ENCODE measurements at regions of chr15 and their contacts with region 1.

Region 1: GRCh38 chr15:94119923-94120775 is 111.2 kb upstream of the MCTP2 start:
- DNase-seq: peak; percentile 73 to 82
- H3K4me3 ChIP-seq: no peak overlapping the region
- H3K27ac ChIP-seq: peak overlapping the region; percentile 57 to 72
- H3K4me1 ChIP-seq: peaks cover 0 to 5% of the 10 kb centered on the region in 2 donors
- H3K27me3 ChIP-seq: no peaks in the 10 kb centered on the region
- CTCF ChIP-seq: peak; percentile 95 to 100 (median 98)
- POLR2A ChIP-seq: peak in 1 of 2 donors; percentile 35

Region 2: DNA sequence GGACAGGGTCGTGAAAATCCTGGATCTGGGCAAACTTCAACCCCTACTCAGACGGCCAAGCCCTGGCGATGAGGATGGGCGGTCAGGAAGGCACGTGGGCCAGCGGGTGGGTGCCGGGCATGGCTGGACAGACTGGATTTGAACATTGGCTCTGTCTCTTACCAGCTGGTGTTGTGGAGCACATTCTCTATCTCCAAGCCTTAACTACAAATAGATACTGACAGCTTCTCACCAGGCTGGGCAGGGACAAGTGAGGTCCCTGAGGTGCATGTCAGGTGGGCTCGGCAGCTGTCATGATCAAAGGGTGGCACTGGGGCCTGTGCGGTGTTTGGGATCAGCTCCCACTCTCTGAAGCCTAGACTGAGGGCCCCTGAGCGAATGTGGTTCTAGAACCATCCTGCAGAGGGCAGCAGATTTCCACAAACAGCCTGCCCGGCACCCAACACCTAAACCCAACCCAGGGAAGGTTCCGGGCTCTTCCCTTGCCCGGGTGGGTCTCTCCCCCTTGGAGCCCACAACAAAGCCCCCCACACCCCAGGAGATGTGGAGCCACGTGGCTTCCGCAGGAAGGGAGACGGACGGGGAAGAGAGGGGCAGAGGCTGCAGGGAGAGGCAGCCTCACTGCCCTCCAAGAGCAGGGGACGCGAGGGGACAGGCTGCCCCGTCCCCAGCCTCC is 1089.6 kb before region 1 on chr15:
- intact Hi-C with region 1: loop called (anchors 5 kb)
- DNase-seq: peak; percentile 76 to 81
- H3K4me3 ChIP-seq: no peak overlapping the region
- H3K27ac ChIP-seq: peak overlapping the region; percentile 68 to 82
- H3K4me1 ChIP-seq: peaks cover 0 to 4% of the 10 kb centered on the region in 2 donors
- H3K27me3 ChIP-seq: no peaks in the 10 kb centered on the region
- CTCF ChIP-seq: peak; percentile 78 to 94 (median 89)
- POLR2A ChIP-seq: no peak

Region 3: GRCh38 chr15:93997084-93997918 is 122.8 kb before region 1 on chr15:
- intact Hi-C with region 1: loop called (anchors 5 kb)
- DNase-seq: peak in 1 of 2 donors; percentile 31
- H3K4me3 ChIP-seq: no peak overlapping the region
- H3K27ac ChIP-seq: no peak overlapping the region
- H3K4me1 ChIP-seq: no peaks in the 10 kb centered on the region
- H3K27me3 ChIP-seq: no peaks in the 10 kb centered on the region
- CTCF ChIP-seq: peak; percentile 61 to 80 (median 72)
- POLR2A ChIP-seq: no peak

Measured in uterus (tissue), 4 donors.